ENCODE measurements at regions of chr11 and their contacts with region 1.

Region 1: GRCh38 chr11:131064373-131064991 is 148.2 kb upstream of the SNX19 start:
- DNase-seq: peak; percentile 70
- H3K4me3 Mint-ChIP-seq: no peak overlapping the region
- H3K27ac Mint-ChIP-seq: no peak overlapping the region
- H3K4me1 Mint-ChIP-seq: no peaks in the 10 kb centered on the region
- H3K27me3 Mint-ChIP-seq: no peaks in the 10 kb centered on the region

Region 2: DNA sequence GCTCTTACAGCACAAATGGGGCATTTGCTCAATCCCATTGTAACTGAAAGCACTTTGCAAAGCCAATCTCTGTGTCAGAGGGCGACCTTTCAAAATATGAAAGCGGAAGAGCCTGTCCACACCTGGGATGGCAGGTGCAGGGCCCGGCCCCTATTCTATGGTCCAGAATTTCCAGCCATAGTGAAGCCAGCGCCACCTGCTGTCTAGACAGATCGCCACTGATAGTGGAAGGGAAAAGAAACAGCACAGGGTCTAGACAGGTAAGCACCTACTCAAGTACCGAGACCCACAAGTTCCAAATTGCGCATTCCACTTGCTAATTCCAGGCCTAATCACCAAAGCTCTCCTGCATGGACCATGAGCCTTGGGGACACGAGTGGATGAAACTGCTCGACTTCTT is 447.3 kb after region 1 on chr11:
- intact Hi-C with region 1: loop called (anchors 5 kb)
- DNase-seq: peak; percentile 57
- H3K4me3 Mint-ChIP-seq: no peak overlapping the region
- H3K27ac Mint-ChIP-seq: no peak overlapping the region
- H3K4me1 Mint-ChIP-seq: no peaks in the 10 kb centered on the region
- H3K27me3 Mint-ChIP-seq: no peaks in the 10 kb centered on the region

Region 3: DNA sequence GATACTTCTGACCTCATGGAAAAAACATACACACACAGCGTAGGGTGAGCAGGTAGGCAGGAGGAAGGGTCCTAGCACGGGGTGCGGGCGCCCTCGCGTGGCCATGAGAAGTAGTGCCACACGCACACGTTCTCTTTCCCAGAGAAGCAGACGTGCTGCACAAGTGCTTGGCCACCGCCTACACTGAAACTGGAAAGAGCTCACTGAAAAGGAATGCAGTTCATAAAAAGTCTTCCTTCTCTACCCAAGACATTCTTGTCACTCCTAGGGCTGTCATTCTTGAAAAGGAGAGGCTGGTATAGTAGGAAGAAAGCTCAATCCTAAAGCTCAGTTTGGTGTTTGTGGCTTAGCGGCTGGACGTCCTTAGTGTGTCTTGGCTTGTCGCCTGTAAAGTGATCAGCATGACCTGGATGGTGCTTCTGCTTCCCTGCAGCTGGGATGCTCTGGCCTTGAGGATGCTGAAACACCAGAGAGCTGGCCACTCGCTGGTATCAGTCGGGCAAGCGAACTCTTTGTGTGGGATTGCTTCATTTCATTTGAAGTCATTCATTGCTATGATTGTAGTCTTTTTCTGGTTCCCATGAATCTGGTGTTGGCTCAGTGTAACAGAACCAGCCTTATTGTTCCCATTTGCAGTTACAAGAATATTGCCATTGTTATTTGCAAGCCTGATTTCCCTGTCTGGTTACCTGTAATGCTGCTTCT is 609.7 kb after region 1 on chr11:
- intact Hi-C with region 1: loop called (anchors 2 kb)
- DNase-seq: peak; percentile 86
- H3K4me3 Mint-ChIP-seq: no peak overlapping the region
- H3K27ac Mint-ChIP-seq: peak overlapping the region; percentile 15
- H3K4me1 Mint-ChIP-seq: peaks cover 3% of the 10 kb centered on the region
- H3K27me3 Mint-ChIP-seq: no peaks in the 10 kb centered on the region